IMR-90 (cell line): ENCODE measurements at regions of chr11 and their contacts with region 1.

Region 1: DNA sequence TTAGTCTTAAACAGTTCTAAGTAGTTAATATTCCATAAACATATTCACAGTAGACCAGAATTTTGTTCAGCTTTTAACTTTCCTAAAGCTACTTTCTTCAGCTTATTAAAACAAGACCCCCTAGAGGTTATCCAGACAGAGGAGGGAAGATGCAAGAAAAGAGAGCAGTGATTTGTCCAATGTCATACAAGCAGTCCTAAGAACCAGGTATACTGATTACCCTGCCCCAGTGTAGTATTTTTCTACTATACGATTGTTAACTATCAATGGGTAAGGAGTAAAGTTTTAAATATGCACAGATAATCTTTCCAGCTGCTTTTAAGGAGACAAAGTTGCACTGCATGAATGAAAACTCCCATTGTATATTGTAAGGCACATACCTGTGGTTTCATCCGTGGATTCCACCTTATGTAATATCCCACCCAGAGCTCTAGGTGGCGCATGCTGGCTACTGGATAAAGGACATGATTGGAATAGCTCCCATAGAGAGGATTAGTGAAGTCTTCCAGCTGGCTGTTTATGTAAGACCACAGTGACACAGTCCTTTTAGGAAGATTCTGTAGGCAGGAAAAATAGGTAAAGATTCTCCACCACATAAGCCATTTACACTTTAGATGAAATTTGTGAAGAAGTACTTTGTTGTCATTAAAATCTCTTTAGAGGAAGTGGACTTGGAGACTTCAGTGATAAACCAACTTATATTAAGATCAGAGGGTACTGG is 45.6 kb downstream of the CEP57 start:
- DNase-seq: peak; percentile 96
- ATAC-seq: peak; percentile 84
- H3K4me3 ChIP-seq: no peak overlapping the region
- H3K27ac ChIP-seq: no peak overlapping the region
- H3K4me1 ChIP-seq: peaks cover 12% of the 10 kb centered on the region
- H3K27me3 ChIP-seq: no peaks in the 10 kb centered on the region
- CTCF ChIP-seq: peak; percentile 97
- POLR2A ChIP-seq: no peak
- RAD21 ChIP-seq: peak; percentile 95

Region 2: GRCh38 chr11:95790123-95790932 is 45.6 kb before region 1 on chr11 and contains the start of gene CEP57:
- CTCF ChIA-PET with region 1: interaction called, 4 read pairs
- POLR2A ChIA-PET with region 1: no interaction called
- dilution Hi-C with region 1: no loop called
- in situ Hi-C with region 1: no loop called
- intact Hi-C with region 1: loop called (anchors 2 kb)
- DNase-seq: peak; percentile 99
- ATAC-seq: peak; percentile 76
- H3K4me3 ChIP-seq: peak within 1 kb of the TSS; percentile 78
- H3K27ac ChIP-seq: peak within 1 kb of the TSS; percentile 85
- H3K4me1 ChIP-seq: no peaks in the 10 kb centered on the region
- H3K27me3 ChIP-seq: no peaks in the 10 kb centered on the region
- CTCF ChIP-seq: no peak
- POLR2A ChIP-seq: peak; percentile 58
- RAD21 ChIP-seq: no peak
- total RNA-seq, gene CEP57: 30.5 and 38.0 TPM in 2 replicates

Region 3: DNA sequence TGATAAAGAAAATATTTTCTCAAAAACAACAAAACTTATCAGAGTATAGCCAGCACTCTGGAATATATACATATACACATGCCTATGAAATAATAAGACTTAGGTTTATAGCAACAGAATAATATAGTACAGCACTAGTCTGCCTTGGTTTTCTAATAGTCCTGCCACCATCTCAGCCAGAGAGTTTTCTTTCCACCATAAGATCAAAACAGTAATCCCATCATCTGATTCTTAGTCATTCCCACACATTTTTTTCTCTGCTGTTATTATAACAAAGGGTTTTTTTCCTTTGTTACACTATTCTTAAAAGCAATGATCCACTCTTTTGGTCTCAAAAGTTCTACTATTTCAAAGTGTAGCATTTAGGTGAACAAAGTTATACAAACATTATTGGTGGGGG is 72.9 kb after region 1 on chr11:
- CTCF ChIA-PET with region 1: no interaction called
- POLR2A ChIA-PET with region 1: no interaction called
- dilution Hi-C with region 1: no loop called
- in situ Hi-C with region 1: no loop called
- intact Hi-C with region 1: no loop called
- DNase-seq: peak; percentile 49
- ATAC-seq: no peak
- H3K4me3 ChIP-seq: no peak overlapping the region
- H3K27ac ChIP-seq: no peak overlapping the region
- H3K4me1 ChIP-seq: peaks cover 5% of the 10 kb centered on the region; the same call in 1 of the 2 replicates
- H3K27me3 ChIP-seq: no peaks in the 10 kb centered on the region
- CTCF ChIP-seq: no peak
- POLR2A ChIP-seq: no peak
- RAD21 ChIP-seq: no peak

Region 4: GRCh38 chr11:95991545-95991944 is 155.6 kb after region 1 on chr11:
- CTCF ChIA-PET with region 1: no interaction called
- POLR2A ChIA-PET with region 1: no interaction called
- dilution Hi-C with region 1: no loop called
- in situ Hi-C with region 1: no loop called
- intact Hi-C with region 1: loop called (anchors 5 kb)
- DNase-seq: peak; percentile 80
- ATAC-seq: peak; percentile 85
- H3K4me3 ChIP-seq: no peak overlapping the region
- H3K27ac ChIP-seq: peak overlapping the region; percentile 51; the same call in 1 of the 2 replicates
- H3K4me1 ChIP-seq: peaks cover 13% of the 10 kb centered on the region
- H3K27me3 ChIP-seq: no peaks in the 10 kb centered on the region
- CTCF ChIP-seq: no peak
- POLR2A ChIP-seq: no peak
- RAD21 ChIP-seq: no peak

Region 5: GRCh38 chr11:96054870-96055705 is 219.2 kb after region 1 on chr11:
- CTCF ChIA-PET with region 1: no interaction called
- POLR2A ChIA-PET with region 1: no interaction called
- dilution Hi-C with region 1: no loop called
- in situ Hi-C with region 1: no loop called
- intact Hi-C with region 1: loop called (anchors 5 kb)
- DNase-seq: peak; percentile 64
- ATAC-seq: no peak
- H3K4me3 ChIP-seq: no peak overlapping the region
- H3K27ac ChIP-seq: 0 out of 2 replicates have a peak overlapping the region, but pooled peaks have one; percentile 37
- H3K4me1 ChIP-seq: peaks cover 33% of the 10 kb centered on the region
- H3K27me3 ChIP-seq: no peaks in the 10 kb centered on the region
- CTCF ChIP-seq: peak; percentile 63
- POLR2A ChIP-seq: no peak
- RAD21 ChIP-seq: peak; percentile 64

Region 6: GRCh38 chr11:96235751-96236150 is 399.8 kb after region 1 on chr11:
- CTCF ChIA-PET with region 1: interaction called, 3 read pairs
- POLR2A ChIA-PET with region 1: no interaction called
- dilution Hi-C with region 1: no loop called
- in situ Hi-C with region 1: no loop called
- intact Hi-C with region 1: loop called (anchors 5 kb)
- DNase-seq: peak; percentile 73
- ATAC-seq: peak; percentile 74
- H3K4me3 ChIP-seq: no peak overlapping the region
- H3K27ac ChIP-seq: peak overlapping the region; percentile 84; the same call in 1 of the 2 replicates
- H3K4me1 ChIP-seq: peaks cover 19% of the 10 kb centered on the region
- H3K27me3 ChIP-seq: no peaks in the 10 kb centered on the region
- CTCF ChIP-seq: no peak
- POLR2A ChIP-seq: no peak
- RAD21 ChIP-seq: no peak

Region 7: DNA sequence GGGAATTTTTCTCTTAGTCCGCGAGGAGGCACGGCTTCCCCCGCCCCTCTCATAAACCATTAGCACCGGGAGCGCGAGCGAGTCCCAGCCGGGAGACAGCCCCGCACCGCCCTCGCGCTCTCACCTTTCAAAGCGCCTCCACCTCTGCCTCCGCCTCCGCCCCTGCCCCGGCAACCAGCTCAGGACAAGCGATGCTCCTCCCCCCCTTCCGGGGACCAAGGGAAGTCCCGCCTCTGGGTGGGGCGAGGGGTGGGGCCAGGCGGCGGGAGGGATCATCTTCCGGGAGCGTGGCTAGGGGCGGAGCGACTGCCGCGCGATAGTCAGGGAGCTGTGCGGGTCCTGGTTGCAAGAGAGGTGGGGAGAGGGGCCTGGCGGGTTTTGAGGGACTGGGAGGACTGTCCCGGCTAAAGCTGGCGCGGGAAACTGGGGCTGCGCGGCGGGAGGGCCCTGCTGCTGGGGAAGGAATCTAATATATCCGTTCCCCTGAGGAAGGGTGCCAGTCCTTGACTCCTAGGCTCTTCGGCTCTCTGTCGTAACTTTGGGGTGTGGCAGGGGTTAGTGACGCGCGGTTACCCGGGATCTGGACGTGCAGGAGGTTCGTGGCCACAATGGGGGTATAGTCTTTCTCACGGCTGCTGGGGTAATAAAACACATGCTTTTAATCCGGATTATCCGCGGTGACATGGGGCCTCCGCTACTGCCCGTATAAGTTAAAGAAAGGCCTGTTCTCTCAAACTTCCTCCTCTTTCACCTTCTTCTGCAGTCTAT is 554.0 kb after region 1 on chr11 and contains the starts of genes CCDC82 and JRKL:
- CTCF ChIA-PET with region 1: interaction called, 4 read pairs
- POLR2A ChIA-PET with region 1: no interaction called
- dilution Hi-C with region 1: no loop called
- in situ Hi-C with region 1: loop called (anchors 10 kb)
- intact Hi-C with region 1: loop called (anchors 2 kb)
- DNase-seq: peak; percentile 92
- ATAC-seq: peak; percentile 99
- H3K4me3 ChIP-seq: peak within 1 kb of the TSS; percentile 92
- H3K27ac ChIP-seq: peak within 1 kb of the TSS; percentile 91
- H3K4me1 ChIP-seq: no peaks in the 10 kb centered on the region; the same call in 1 of the 2 replicates
- H3K27me3 ChIP-seq: no peaks in the 10 kb centered on the region
- CTCF ChIP-seq: no peak
- POLR2A ChIP-seq: peak; percentile 83
- RAD21 ChIP-seq: no peak
- total RNA-seq, gene CCDC82: 4.1 and 11.7 TPM in 2 replicates
- total RNA-seq, gene JRKL: 5.9 and 10.3 TPM in 2 replicates